AG04450 (cell line): ENCODE measurements at regions of chr1 and their contacts with region 1.

Region 1: GRCh38 chr1:19882111-19883071 is at the start of gene OTUD3:
- DNase-seq: peak; percentile 94
- H3K4me3 ChIP-seq: peak within 1 kb of the TSS; percentile 67
- H3K27ac ChIP-seq: peak within 1 kb of the TSS; percentile 84
- H3K27me3 ChIP-seq: peaks cover 4% of the 10 kb centered on the region
- CTCF ChIP-seq: peak; percentile 87
- polyA plus RNA-seq, gene OTUD3: 3.9 and 4.8 TPM in 2 replicates

Region 2: DNA sequence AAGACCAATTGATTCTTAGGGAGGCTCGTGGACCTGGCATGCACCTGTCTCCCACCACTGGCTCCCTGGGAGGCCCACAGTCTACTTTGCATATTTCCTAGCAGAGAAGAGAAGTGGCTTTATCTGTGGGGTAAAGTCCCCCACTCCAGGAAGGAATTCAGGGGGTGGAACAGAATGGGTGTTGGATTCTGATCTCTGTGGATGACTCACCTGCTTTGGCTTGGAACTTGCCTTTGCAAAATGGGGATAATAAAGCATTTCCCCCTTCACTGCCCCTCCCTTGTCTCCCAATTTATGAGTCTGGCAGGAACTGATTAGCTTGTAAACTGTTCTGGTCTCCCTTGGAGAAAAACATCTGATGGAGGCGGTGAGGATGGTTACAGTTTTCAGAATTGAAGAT is 21.4 kb before region 1 on chr1:
- CTCF ChIA-PET with region 1: interaction called, 17 read pairs
- POLR2A ChIA-PET with region 1: no interaction called
- DNase-seq: no peak
- H3K4me3 ChIP-seq: no peak overlapping the region
- H3K27ac ChIP-seq: no peak overlapping the region
- H3K27me3 ChIP-seq: no peaks in the 10 kb centered on the region
- CTCF ChIP-seq: no peak

Region 3: GRCh38 chr1:19866758-19867157 is 15.6 kb before region 1 on chr1:
- CTCF ChIA-PET with region 1: interaction called, 17 read pairs
- POLR2A ChIA-PET with region 1: interaction called, 3 read pairs
- DNase-seq: no peak
- H3K4me3 ChIP-seq: no peak overlapping the region
- H3K27ac ChIP-seq: no peak overlapping the region
- H3K27me3 ChIP-seq: no peaks in the 10 kb centered on the region
- CTCF ChIP-seq: no peak

Region 4: DNA sequence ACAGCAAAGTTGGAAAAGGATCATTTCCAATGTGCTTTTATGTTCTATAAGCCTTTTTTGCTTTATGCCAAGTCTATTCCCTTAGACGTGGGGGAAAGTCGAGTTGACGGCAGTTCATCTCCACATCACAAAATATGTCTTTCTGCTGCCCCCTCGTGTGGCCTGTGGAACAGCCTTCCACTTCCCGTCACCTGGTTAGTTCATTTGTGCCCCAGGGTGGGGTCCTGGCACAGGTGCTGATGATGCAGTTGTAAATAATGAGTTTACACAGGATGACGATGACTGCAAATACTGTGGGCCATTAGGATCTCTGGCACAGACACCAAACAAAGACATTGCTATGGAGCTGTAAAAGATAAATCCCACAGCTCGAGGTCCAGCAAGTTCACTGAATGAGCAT is 10.2 kb before region 1 on chr1:
- CTCF ChIA-PET with region 1: interaction called, 12 read pairs
- POLR2A ChIA-PET with region 1: interaction called, 3 read pairs
- DNase-seq: no peak
- H3K4me3 ChIP-seq: no peak overlapping the region
- H3K27ac ChIP-seq: no peak overlapping the region
- H3K27me3 ChIP-seq: peaks cover 8% of the 10 kb centered on the region
- CTCF ChIP-seq: no peak

Region 5: DNA sequence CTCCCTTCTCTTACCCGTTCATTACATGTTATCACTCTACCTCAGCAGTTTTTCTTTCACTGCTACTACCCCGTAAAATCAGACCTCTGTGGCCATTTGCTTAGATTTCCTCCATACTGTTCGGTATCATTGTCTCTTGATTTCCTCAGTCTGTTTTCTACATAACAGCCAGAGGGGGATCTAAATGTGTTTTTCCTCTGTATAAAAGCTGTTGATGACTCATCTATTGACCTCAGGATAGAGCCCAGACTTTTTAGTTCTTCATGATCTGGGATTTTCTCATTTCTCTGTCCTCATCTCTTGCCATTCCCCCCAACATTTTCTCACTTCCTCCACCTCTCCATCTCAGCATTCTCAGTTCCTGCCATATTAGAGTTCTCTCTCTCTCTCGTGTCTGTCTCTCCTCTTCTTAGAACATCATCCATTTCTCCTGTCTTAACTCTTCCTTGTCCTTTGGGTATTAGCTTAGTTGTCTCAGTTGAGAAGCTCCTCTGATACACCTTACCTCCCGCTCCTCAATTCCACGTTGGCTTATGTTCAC is 10.3 kb after region 1 on chr1:
- CTCF ChIA-PET with region 1: interaction called, 15 read pairs
- POLR2A ChIA-PET with region 1: interaction called, 3 read pairs
- DNase-seq: no peak
- H3K4me3 ChIP-seq: no peak overlapping the region
- H3K27ac ChIP-seq: no peak overlapping the region
- H3K27me3 ChIP-seq: no peaks in the 10 kb centered on the region
- CTCF ChIP-seq: peak; percentile 15; the same call in 1 of the 2 replicates

Region 6: DNA sequence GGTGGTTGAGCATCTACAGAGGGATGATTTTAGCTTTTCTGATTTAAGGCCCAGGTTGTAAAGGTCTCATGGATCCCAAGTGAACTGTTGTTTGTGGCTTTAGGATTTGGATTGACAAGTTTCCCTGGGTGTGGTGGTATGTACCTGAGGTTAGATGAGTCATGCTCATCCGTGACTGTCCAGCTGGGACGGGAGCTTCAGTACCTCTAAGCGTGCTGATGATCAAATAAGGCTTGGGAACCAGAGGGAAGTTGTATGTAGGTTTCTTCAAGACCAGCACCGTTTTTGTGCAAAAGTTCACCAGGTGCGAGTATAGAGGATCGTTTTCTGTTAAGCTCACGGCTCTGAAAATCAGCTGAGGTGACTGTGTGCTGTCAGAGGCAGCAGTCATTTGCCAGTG is 21.2 kb after region 1 on chr1:
- CTCF ChIA-PET with region 1: interaction called, 10 read pairs
- POLR2A ChIA-PET with region 1: no interaction called
- DNase-seq: no peak
- H3K4me3 ChIP-seq: no peak overlapping the region
- H3K27ac ChIP-seq: no peak overlapping the region
- H3K27me3 ChIP-seq: no peaks in the 10 kb centered on the region
- CTCF ChIP-seq: no peak

Region 7: GRCh38 chr1:19918057-19918456 is 35.7 kb after region 1 on chr1:
- CTCF ChIA-PET with region 1: interaction called, 12 read pairs
- POLR2A ChIA-PET with region 1: no interaction called
- DNase-seq: peak; percentile 60
- H3K4me3 ChIP-seq: no peak overlapping the region
- H3K27ac ChIP-seq: no peak overlapping the region
- H3K27me3 ChIP-seq: peaks cover 11% of the 10 kb centered on the region
- CTCF ChIP-seq: peak; percentile 96